Activated CD4-positive, alpha-beta T cell treated with anti-CD3 and anti-CD28 coated beads for 36 hours (primary cell): ENCODE measurements at regions of chr19 and their contacts with region 1.

Region 1: GRCh38 chr19:12440541-12441316 is at the start of gene ZNF443:
- DNase-seq: peak; percentile 99
- ATAC-seq: peak; percentile 98
- H3K4me3 Mint-ChIP-seq: peak within 1 kb of the TSS; percentile 99
- H3K27ac Mint-ChIP-seq: peak within 1 kb of the TSS; percentile 99
- H3K4me1 Mint-ChIP-seq: peaks cover 10% of the 10 kb centered on the region
- H3K27me3 Mint-ChIP-seq: no peaks in the 10 kb centered on the region
- total RNA-seq, gene ZNF443: 3.4 to 4.0 TPM

Region 2: DNA sequence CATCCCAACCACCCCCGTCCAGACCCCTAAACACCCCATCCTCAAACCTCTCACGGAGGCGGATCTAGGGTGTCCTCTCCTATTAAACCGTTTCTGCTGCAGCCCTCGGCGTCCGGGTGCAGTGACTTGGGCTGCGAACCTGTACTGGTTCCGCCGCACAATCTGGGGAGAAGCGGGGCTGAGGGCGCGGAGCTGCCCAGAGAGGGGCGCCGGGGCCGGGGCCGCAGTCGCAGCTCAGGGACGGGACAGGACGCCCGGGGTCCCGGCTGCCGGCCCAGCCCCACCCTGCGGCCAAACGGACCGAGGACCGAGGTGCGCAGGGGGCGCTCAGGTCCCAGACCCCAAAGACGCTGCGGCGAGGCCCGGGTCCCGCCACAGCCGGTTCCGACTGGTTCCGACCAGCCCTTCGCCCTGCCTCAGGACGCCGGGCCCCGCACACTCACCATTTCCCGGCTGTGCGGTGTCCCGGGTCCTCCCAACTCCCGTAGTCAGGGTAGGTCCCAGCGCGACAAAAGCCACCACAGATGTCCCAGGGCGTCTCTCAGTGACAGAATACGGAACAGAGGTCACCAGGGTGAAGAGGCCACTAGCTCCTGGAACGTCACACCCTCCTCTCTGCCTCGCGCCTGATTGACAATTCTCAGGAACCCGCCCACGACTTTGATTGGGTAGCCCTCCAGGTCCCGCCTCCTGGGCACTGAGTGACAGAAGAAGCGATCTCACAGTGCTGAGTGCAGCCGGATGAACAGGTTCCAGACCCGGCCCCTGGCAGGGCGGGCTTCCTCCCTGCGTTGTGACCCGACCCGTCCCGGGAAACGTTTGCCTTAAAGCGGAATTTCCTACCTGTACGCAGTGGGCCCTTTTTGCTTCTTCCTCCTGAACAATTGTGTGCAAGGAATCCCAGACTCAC is 146.2 kb before region 1 on chr19 and contains the start of gene ZNF44:
- CTCF ChIA-PET with region 1: no interaction called
- POLR2A ChIA-PET with region 1: no interaction called
- intact Hi-C with region 1: loop called (anchors 1 to 5 kb)
- DNase-seq: peak; percentile 98
- ATAC-seq: peak; percentile 98
- H3K4me3 Mint-ChIP-seq: peak within 1 kb of the TSS; percentile 98
- H3K27ac Mint-ChIP-seq: peak within 1 kb of the TSS; percentile 98
- H3K4me1 Mint-ChIP-seq: peaks cover 32% of the 10 kb centered on the region
- H3K27me3 Mint-ChIP-seq: no peaks in the 10 kb centered on the region
- total RNA-seq, gene ZNF44: 7.3 to 8.1 TPM

Region 3: GRCh38 chr19:12365236-12366162 is 75.2 kb before region 1 on chr19 and contains the start of gene ZNF442:
- CTCF ChIA-PET with region 1: no interaction called
- POLR2A ChIA-PET with region 1: no interaction called
- intact Hi-C with region 1: loop called in 1 of 2 experiments (anchors 1 kb)
- DNase-seq: peak; percentile 93
- ATAC-seq: peak; percentile 99
- H3K4me3 Mint-ChIP-seq: peak within 1 kb of the TSS; percentile 93
- H3K27ac Mint-ChIP-seq: peak within 1 kb of the TSS; percentile 79
- H3K4me1 Mint-ChIP-seq: peaks cover 18% of the 10 kb centered on the region
- H3K27me3 Mint-ChIP-seq: no peaks in the 10 kb centered on the region
- total RNA-seq, gene ZNF442: 1.1 to 1.7 TPM

Region 4: GRCh38 chr19:12484371-12485051 is 43.8 kb after region 1 on chr19 and contains the start of gene ZNF709:
- CTCF ChIA-PET with region 1: no interaction called
- POLR2A ChIA-PET with region 1: no interaction called
- intact Hi-C with region 1: loop called (anchors 1 to 2 kb)
- DNase-seq: peak; percentile 92
- ATAC-seq: peak; percentile 98
- H3K4me3 Mint-ChIP-seq: peak within 1 kb of the TSS; percentile 87
- H3K27ac Mint-ChIP-seq: peak within 1 kb of the TSS; percentile 58
- H3K4me1 Mint-ChIP-seq: peaks cover 27% of the 10 kb centered on the region
- H3K27me3 Mint-ChIP-seq: no peaks in the 10 kb centered on the region
- total RNA-seq, gene ZNF709: 1.7 to 2.1 TPM

Region 5: DNA sequence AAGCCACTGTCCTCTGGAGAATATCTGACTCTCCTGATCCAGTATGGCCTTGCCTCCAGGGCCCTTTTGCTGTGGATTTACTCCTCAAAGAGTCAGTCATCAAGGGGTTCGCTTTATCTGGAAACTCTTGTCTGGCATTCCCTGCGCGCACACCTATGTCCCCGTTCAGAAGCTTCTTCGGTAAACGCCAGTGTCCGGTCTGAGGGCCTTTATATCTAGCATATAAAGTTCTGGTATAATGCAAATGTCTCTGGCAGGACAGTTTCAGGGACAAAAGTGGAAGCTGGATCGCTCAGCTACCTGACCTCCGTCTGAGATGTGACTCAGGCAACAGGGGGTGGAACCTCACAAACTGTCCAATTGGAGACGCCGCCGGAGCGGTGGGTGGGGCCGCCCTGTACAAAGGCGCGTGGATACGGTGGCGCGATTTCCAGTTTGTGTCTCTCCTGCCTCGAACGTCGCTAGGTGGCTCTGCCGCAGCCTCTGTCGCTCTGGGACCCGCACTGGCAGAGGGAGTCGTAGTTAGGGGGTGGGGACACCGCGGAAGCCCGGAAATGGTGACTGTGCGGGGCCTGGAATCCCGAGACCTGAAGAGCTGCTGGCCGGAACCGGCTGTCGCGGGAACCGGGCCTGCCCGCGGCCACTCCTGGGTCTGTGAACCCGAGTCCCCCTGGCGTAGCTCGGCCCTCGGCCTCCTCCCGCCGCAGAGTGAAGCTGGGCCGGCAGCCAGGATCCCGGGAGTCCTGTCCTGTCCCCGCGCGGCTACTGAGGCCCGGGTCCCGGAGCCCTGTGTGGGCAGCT is 54.5 kb after region 1 on chr19:
- CTCF ChIA-PET with region 1: no interaction called
- POLR2A ChIA-PET with region 1: no interaction called
- intact Hi-C with region 1: loop called in 1 of 2 experiments (anchors 1 kb)
- DNase-seq: peak; percentile 97
- ATAC-seq: peak; percentile 100
- H3K4me3 Mint-ChIP-seq: peak overlapping the region; percentile 75
- H3K27ac Mint-ChIP-seq: peak overlapping the region; percentile 71
- H3K4me1 Mint-ChIP-seq: peaks cover 7% of the 10 kb centered on the region
- H3K27me3 Mint-ChIP-seq: no peaks in the 10 kb centered on the region